Activated T-helper 1 cell treated with anti-CD3 and anti-CD28 coated beads, Interleukin-12 subunit alpha, Interleukin-12 subunit beta, Interleukin-2, Interleukin-4 antibody, amounts not matched to agents 30 ng/mL and 10 ng/mL and 1 ng/mL, durations not matched to agents 14 hours and 24 hours and 36 hours (primary cell): ENCODE measurements at regions of chr19 and their contacts with region 1.

Region 1: GRCh38 chr19:40465557-40466150 is at the start of gene BLVRB:
- DNase-seq: peak; percentile 99
- H3K4me3 Mint-ChIP-seq: peak within 1 kb of the TSS; percentile 77
- H3K27ac Mint-ChIP-seq: peak within 1 kb of the TSS; percentile 92
- H3K4me1 Mint-ChIP-seq: peaks cover 28% of the 10 kb centered on the region
- H3K27me3 Mint-ChIP-seq: peaks cover 27% of the 10 kb centered on the region
- total RNA-seq, gene BLVRB: 6.1 and 8.2 TPM in 2 replicates

Region 2: GRCh38 chr19:39768334-39768733 is 697.3 kb before region 1 on chr19:
- intact Hi-C with region 1: no loop called
- DNase-seq: no peak
- H3K4me3 Mint-ChIP-seq: no peak overlapping the region
- H3K27ac Mint-ChIP-seq: no peak overlapping the region
- H3K4me1 Mint-ChIP-seq: no peaks in the 10 kb centered on the region
- H3K27me3 Mint-ChIP-seq: peaks cover 12% of the 10 kb centered on the region

Region 3: GRCh38 chr19:40348125-40348913 is 117.3 kb before region 1 on chr19 and contains the starts of genes C19orf47 and PLD3:
- intact Hi-C with region 1: loop called (anchors 1 kb)
- DNase-seq: peak; percentile 99
- H3K4me3 Mint-ChIP-seq: peak within 1 kb of the TSS; percentile 97
- H3K27ac Mint-ChIP-seq: peak within 1 kb of the TSS; percentile 95
- H3K4me1 Mint-ChIP-seq: peaks cover 21% of the 10 kb centered on the region
- H3K27me3 Mint-ChIP-seq: peaks cover 2% of the 10 kb centered on the region
- total RNA-seq, gene C19orf47: 26.4 and 28.1 TPM in 2 replicates
- total RNA-seq, gene PLD3: 45.0 and 45.3 TPM in 2 replicates

Region 4: DNA sequence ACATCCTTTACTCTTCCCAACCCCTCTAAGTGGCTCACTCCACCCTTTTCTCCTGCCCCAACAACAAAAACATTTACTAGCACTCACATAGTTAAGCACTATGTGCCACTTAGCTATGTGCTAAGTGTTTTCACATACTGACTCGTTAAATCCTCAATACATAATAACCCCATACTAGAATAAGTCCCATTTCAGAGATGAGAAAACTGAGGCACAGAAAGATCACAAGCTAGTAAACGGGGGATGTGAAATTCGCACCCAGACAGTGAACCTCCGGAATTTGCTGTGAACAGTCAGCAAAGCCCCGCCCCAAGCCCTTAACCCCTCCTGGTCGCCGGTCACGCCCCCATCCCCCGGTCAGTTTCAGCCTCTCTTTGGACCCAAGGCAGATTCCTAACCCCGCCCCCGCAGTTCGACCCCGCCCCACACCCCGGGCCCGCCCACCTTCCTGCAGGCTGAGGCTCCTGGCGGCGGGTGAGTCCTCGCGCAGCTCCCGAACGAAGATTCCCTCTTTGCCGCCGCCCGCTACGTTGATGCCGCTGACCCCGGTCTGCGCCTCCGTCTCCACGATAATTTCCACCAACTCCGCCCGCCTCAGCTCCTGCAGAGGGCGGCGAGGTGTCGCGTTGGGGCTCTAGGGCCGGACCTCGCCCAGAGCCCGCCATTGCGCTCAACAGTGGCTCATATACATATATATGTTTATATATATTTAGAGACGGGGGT is 62.2 kb before region 1 on chr19:
- intact Hi-C with region 1: loop called (anchors 1 kb)
- DNase-seq: peak; percentile 80
- H3K4me3 Mint-ChIP-seq: peak overlapping the region; percentile 83
- H3K27ac Mint-ChIP-seq: peak overlapping the region; percentile 72
- H3K4me1 Mint-ChIP-seq: peaks cover 21% of the 10 kb centered on the region
- H3K27me3 Mint-ChIP-seq: peaks cover 7% of the 10 kb centered on the region

Region 5: GRCh38 chr19:40425450-40426287 is 40.0 kb before region 1 on chr19 and contains the start of gene SERTAD1:
- intact Hi-C with region 1: loop called (anchors 1 kb)
- DNase-seq: peak; percentile 100
- H3K4me3 Mint-ChIP-seq: peak within 1 kb of the TSS; percentile 93
- H3K27ac Mint-ChIP-seq: peak within 1 kb of the TSS; percentile 99
- H3K4me1 Mint-ChIP-seq: peaks cover 7% of the 10 kb centered on the region
- H3K27me3 Mint-ChIP-seq: peaks cover 2% of the 10 kb centered on the region
- total RNA-seq, gene SERTAD1: 18.3 and 19.4 TPM in 2 replicates

Region 6: GRCh38 chr19:40529093-40529954 is 63.7 kb after region 1 on chr19:
- intact Hi-C with region 1: loop called (anchors 1 kb)
- DNase-seq: peak; percentile 89
- H3K4me3 Mint-ChIP-seq: peak overlapping the region; percentile 74
- H3K27ac Mint-ChIP-seq: peak overlapping the region; percentile 79
- H3K4me1 Mint-ChIP-seq: peaks cover 13% of the 10 kb centered on the region
- H3K27me3 Mint-ChIP-seq: peaks cover 35% of the 10 kb centered on the region

Region 7: GRCh38 chr19:40614622-40615411 is 149.2 kb after region 1 on chr19:
- intact Hi-C with region 1: loop called (anchors 1 kb)
- DNase-seq: peak; percentile 75
- H3K4me3 Mint-ChIP-seq: peak overlapping the region; percentile 97
- H3K27ac Mint-ChIP-seq: peak overlapping the region; percentile 100
- H3K4me1 Mint-ChIP-seq: peaks cover 41% of the 10 kb centered on the region
- H3K27me3 Mint-ChIP-seq: no peaks in the 10 kb centered on the region

Region 8: DNA sequence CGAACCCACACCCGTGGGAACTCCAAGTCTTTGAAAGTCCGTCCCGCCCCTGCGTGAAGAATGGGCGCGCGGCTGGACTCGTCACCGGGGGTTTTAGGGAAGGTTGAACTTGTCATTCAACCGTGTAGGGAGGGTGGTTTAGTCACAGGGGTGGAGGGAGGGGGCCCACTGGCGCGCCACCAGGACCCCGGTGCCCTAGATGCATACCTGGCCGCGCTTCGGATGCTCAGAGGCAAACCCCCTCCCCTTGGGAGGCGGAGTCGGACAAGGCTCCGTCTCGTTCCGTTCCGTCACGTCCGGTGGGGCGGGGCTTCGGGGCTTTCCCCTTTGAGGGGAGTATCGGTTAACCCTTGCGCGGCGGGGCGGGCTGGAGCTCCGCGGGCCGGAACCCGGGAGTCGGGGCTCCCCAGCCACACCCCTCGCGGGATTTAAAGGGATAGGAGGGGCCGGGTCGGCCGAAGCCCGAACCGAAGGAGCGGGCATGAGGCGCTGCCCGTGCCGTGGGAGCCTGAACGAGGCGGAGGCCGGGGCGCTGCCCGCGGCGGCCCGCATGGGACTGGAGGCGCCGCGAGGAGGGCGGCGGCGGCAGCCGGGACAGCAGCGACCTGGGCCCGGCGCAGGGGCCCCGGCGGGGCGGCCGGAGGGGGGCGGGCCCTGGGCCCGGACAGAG is 251.1 kb after region 1 on chr19 and contains the starts of genes COQ8B and ITPKC:
- intact Hi-C with region 1: loop called (anchors 10 kb)
- DNase-seq: peak; percentile 100
- H3K4me3 Mint-ChIP-seq: peak within 1 kb of the TSS; percentile 97
- H3K27ac Mint-ChIP-seq: peak within 1 kb of the TSS; percentile 95
- H3K4me1 Mint-ChIP-seq: peaks cover 44% of the 10 kb centered on the region
- H3K27me3 Mint-ChIP-seq: no peaks in the 10 kb centered on the region
- total RNA-seq, gene COQ8B: 38.4 and 41.6 TPM in 2 replicates
- total RNA-seq, gene ITPKC: 8.7 and 9.9 TPM in 2 replicates